SK-N-SH (cell line): ENCODE measurements at regions of chr14 and their contacts with region 1.

Region 1: GRCh38 chr14:69535230-69535848 is 39.3 kb downstream of the CCDC177 start:
- DNase-seq: peak; percentile 84
- H3K4me3 ChIP-seq: peak overlapping the region in 1 of 2 experiments; percentile 13; a peak in 1 of 4 replicates
- H3K27ac ChIP-seq: no peak overlapping the region
- H3K4me1 ChIP-seq: no peaks in the 10 kb centered on the region
- H3K27me3 ChIP-seq: peaks cover 5% of the 10 kb centered on the region; the same call in 1 of the 2 replicates
- CTCF ChIP-seq: peak; percentile 75
- EP300 ChIP-seq: no peak
- RAD21 ChIP-seq: peak; percentile 86

Region 2: DNA sequence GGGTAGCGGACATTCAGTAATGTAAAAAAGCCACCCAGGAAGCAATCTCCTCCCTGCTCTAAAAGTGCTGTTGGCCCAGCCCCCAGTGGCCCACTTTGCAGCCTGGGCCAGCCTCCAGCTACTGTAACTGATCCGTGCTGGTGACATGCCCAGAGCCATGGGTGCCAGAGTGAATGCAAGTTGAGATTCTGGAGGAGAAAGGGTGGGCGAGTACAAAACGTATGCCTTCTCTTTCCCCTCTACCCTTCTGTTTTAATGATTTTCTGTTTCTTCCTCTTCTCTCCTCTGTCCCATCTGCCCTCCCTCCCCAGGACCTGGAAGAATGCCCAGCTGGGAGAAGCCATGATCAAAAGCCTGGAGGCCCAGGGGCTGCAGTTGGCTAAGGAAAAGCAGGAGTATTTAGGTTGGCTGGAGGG is 33.9 kb before region 1 on chr14:
- CTCF ChIA-PET with region 1: interaction called, 10 read pairs
- POLR2A ChIA-PET with region 1: no interaction called
- DNase-seq: peak; percentile 57
- H3K4me3 ChIP-seq: no peak overlapping the region
- H3K27ac ChIP-seq: peak overlapping the region in 1 of 2 experiments; percentile 50; a peak in 2 of 4 replicates
- H3K4me1 ChIP-seq: peaks cover 0 to 44% of the 10 kb centered on the region in 2 experiments; a peak in 2 of 4 replicates
- H3K27me3 ChIP-seq: no peaks in the 10 kb centered on the region
- CTCF ChIP-seq: no peak
- EP300 ChIP-seq: no peak
- RAD21 ChIP-seq: no peak

Region 3: DNA sequence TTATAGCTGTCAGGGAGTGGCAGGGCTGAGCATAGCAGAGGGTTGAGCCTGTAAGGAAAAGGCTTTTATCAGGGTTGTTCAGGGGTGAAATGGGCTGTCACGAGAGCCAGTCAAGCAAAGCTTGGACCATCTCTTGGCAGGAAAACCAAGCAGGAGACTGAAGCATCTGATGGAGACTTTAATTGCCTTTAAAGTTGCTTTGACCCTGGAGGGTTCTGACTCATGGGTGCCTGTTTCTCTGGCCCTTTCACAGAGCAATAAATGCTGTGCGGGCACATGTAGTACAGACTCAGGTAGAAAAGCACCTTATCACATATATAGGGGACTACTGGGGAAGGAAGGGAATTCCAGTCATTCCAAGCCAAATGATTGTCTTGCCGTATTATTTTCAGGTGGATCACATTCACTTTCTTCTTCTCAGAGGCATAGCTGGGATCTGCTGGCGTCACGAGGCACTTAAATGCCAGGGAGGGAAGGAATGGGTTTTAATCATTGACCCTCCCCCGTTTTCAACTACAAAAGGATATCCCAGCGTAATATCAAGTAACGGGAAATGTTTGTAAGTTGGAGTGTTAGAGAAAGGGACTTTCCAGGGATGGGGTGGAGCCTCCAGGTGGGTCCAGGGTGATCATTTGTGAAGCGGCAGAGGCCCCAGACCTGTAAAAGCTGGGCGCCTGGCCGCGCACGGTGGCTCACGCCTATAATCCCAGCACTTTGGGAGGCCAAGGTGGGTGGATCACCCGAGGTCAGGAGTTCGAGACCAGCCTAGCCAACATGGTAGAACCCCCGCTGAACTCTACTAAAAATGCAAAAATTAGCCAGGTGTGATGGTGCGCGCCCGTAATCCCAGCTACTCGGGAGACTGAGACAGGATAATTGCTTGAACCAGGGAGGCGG is 15.9 kb before region 1 on chr14:
- CTCF ChIA-PET with region 1: interaction called, 11 read pairs
- POLR2A ChIA-PET with region 1: no interaction called
- DNase-seq: no peak
- H3K4me3 ChIP-seq: no peak overlapping the region
- H3K27ac ChIP-seq: no peak overlapping the region
- H3K4me1 ChIP-seq: peaks cover 0 to 4% of the 10 kb centered on the region in 2 experiments; a peak in 1 of 4 replicates
- H3K27me3 ChIP-seq: no peaks in the 10 kb centered on the region; the same call in 1 of the 2 replicates
- CTCF ChIP-seq: no peak
- EP300 ChIP-seq: no peak
- RAD21 ChIP-seq: no peak

Region 4: GRCh38 chr14:69553221-69553620 is 17.9 kb after region 1 on chr14:
- CTCF ChIA-PET with region 1: interaction called, 22 read pairs
- POLR2A ChIA-PET with region 1: no interaction called
- DNase-seq: no peak
- H3K4me3 ChIP-seq: no peak overlapping the region
- H3K27ac ChIP-seq: no peak overlapping the region
- H3K4me1 ChIP-seq: peaks cover 0 to 3% of the 10 kb centered on the region in 2 experiments; a peak in 1 of 4 replicates
- H3K27me3 ChIP-seq: no peaks in the 10 kb centered on the region; the same call in 1 of the 2 replicates
- CTCF ChIP-seq: no peak
- EP300 ChIP-seq: no peak
- RAD21 ChIP-seq: no peak

Region 5: DNA sequence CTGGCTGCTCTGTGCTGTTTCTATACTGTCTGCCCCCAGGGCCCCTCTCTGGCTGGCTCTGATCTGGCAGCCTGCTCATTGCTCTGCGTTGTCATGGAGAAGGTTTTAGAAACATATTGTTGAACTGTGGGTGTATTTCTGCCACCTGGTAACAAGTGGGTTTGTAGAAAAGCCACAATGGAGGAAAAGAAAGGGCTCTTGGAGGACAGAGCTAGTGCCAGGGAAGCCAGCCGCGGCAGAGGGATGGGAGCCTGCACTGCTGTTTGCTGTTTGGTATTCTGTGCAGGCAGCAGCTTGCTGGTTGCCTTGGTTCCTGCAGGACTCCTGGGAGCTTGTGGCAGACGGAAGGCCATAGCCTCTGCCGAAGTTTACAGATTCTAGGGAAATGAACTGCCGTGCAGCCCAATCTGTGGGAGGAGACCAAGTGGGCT is 24.3 kb after region 1 on chr14:
- CTCF ChIA-PET with region 1: interaction called, 21 read pairs
- POLR2A ChIA-PET with region 1: no interaction called
- DNase-seq: peak; percentile 73
- H3K4me3 ChIP-seq: no peak overlapping the region
- H3K27ac ChIP-seq: peak overlapping the region in 1 of 2 experiments; percentile 76; a peak in 2 of 4 replicates
- H3K4me1 ChIP-seq: peaks cover 0 to 14% of the 10 kb centered on the region in 2 experiments; a peak in 1 of 4 replicates
- H3K27me3 ChIP-seq: peaks cover 26% of the 10 kb centered on the region; the same call in 1 of the 2 replicates
- CTCF ChIP-seq: no peak
- EP300 ChIP-seq: no peak
- RAD21 ChIP-seq: no peak

Region 6: GRCh38 chr14:69574263-69574953 is 39.1 kb after region 1 on chr14 and contains the start of gene CCDC177:
- CTCF ChIA-PET with region 1: interaction called, 368 read pairs
- POLR2A ChIA-PET with region 1: no interaction called
- DNase-seq: peak; percentile 88
- H3K4me3 ChIP-seq: peak within 1 kb of the TSS; percentile 43 to 58
- H3K27ac ChIP-seq: no peak within 1 kb of the TSS
- H3K4me1 ChIP-seq: peaks cover 0 to 2% of the 10 kb centered on the region in 2 experiments; a peak in 1 of 4 replicates
- H3K27me3 ChIP-seq: peaks cover 16% of the 10 kb centered on the region; the same call in 1 of the 2 replicates
- CTCF ChIP-seq: peak; percentile 94
- EP300 ChIP-seq: no peak
- RAD21 ChIP-seq: peak; percentile 78
- polyA plus RNA-seq, gene CCDC177: not detected in 2 replicates

Region 7: DNA sequence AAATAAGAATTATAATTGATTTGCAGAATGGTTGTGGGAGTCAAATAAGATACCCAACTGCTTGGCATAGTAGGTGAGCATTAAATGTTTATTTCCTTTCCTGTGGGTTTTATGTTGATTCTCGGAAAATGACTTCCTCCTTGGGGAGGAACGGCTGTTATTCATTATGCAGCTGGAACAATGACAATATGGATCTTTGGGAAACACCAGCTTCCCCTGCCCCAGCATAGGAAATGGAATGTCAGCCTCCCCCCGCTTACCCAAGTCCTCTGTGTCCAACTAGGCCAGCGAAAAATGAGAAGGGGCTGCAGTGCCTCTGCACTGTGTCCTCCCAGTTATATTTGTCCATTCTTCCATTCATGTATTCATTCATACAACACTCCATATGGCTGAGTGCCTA is 51.1 kb after region 1 on chr14:
- CTCF ChIA-PET with region 1: interaction called, 368 read pairs
- POLR2A ChIA-PET with region 1: no interaction called
- DNase-seq: no peak
- H3K4me3 ChIP-seq: no peak overlapping the region
- H3K27ac ChIP-seq: no peak overlapping the region
- H3K4me1 ChIP-seq: no peaks in the 10 kb centered on the region; a peak in 1 of 4 replicates
- H3K27me3 ChIP-seq: no peaks in the 10 kb centered on the region
- CTCF ChIP-seq: no peak
- EP300 ChIP-seq: no peak
- RAD21 ChIP-seq: no peak